Colonic mucosa (tissue), 4 donors: ENCODE measurements at regions of chr4 and their contacts with region 1.

Region 1: GRCh38 chr4:55948726-55949474 is at the start of gene CEP135:
- DNase-seq: peak; percentile 94
- H3K4me3 ChIP-seq: peak within 1 kb of the TSS; percentile 74
- H3K27ac ChIP-seq: peak within 1 kb of the TSS; percentile 97
- H3K4me1 ChIP-seq: no peaks in the 10 kb centered on the region
- H3K27me3 ChIP-seq: no peaks in the 10 kb centered on the region
- CTCF ChIP-seq: peak; percentile 96
- total RNA-seq, gene CEP135: 4.0 to 7.3 TPM

Region 2: DNA sequence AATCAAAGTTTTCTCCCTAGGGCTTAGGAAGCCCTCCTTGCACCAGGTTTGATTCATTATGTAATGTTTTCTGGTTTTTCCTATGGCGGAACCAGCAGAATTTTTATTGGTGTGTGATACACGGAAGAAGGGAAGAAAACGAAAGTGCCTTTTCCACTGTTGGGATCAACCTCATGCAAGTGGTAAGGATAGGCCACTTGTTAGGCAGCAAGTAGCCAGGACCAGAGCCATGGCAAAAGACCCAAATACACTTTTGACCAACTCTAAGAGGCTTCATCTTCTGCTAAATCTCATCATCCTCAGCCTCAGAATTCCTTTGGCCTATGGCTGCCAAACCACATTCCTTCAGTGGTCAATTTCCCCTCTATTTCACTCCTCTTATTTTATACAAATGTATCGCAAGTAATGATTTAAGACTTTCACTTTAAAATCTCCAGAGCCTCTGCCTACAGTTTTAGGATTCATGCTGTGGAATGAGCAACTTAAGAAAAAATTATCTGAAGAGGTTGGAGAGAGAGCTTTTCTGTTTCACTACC is 465.3 kb after region 1 on chr4:
- intact Hi-C with region 1: no loop called
- DNase-seq: no peak
- H3K4me3 ChIP-seq: no peak overlapping the region
- H3K27ac ChIP-seq: no peak overlapping the region
- H3K4me1 ChIP-seq: peaks cover 4% of the 10 kb centered on the region
- H3K27me3 ChIP-seq: no peaks in the 10 kb centered on the region
- CTCF ChIP-seq: no peak

Region 3: DNA sequence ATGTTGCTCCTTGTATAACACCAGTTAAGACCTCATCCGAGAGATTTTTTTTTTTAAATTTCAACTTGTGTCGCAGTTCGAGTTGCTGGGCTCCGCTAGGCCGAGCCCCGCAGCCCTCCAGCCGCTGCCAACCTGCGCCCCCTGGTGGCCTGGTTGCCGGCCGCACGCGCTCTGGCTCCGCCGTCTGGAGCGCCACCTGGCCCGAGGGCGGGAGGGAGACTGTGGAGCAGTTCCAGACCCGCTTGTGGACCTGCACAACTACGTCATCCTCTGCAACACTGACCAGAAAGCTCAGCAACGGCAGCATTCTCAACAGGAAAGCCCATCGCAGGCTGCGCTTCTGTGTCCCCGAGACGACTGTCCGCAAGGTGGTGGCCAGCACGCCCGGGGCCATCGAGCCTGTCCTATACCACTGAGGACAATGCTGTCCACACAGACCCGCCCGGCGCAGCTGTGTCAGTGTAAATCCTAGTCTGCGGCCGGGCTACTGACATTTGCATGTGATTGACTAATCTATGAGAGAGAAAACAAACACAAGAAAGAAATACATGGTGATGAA is 595.8 kb after region 1 on chr4:
- intact Hi-C with region 1: loop called (anchors 5 kb)
- DNase-seq: peak; percentile 86
- H3K4me3 ChIP-seq: peak overlapping the region; percentile 4
- H3K27ac ChIP-seq: no peak overlapping the region
- H3K4me1 ChIP-seq: no peaks in the 10 kb centered on the region
- H3K27me3 ChIP-seq: no peaks in the 10 kb centered on the region
- CTCF ChIP-seq: peak; percentile 99